GM12878 (cell line): ENCODE measurements at regions of chr6 and their contacts with region 1.

Region 1: DNA sequence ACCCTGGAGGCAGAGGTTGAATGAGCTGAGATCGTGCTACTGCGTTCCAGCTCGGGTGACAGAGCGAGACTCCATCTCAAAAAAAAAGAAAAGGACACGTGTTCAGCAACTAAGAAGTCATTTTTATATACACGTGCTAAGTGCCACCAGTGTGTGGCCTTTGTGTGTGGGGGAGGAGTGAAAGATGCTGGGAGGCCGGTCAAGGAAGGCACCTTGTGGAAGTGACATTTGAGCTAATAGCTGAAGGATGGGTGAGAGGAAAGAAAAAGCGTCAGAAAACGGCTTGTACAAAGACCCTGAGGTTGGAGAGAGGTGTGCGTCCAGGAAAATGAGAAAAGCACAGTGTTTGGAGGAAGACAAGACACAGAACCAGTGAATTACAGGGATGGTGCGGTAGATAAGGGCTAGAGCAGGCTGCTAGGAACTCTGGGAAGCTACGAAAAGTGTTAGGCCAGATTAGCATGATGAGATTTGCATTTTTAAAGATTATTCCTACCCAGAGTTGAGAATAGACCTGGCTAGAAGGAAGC is 11.6 kb downstream of the RREB1 start:
- DNase-seq: no peak
- ATAC-seq: no peak
- H3K4me3 ChIP-seq: no peak overlapping the region
- H3K27ac ChIP-seq: no peak overlapping the region
- H3K4me1 ChIP-seq: peaks cover 18% of the 10 kb centered on the region
- H3K27me3 ChIP-seq: no peaks in the 10 kb centered on the region
- CTCF ChIP-seq: no peak
- EP300 ChIP-seq: no peak
- POLR2A ChIP-seq: no peak
- RAD21 ChIP-seq: no peak

Region 2: GRCh38 chr6:7129784-7130569 is 10.6 kb after region 1 on chr6:
- CTCF ChIA-PET with region 1: interaction called, 8 read pairs
- POLR2A ChIA-PET with region 1: interaction called, 17 read pairs
- RAD21 ChIA-PET with region 1: interaction called, 23 read pairs
- SMC1A ChIA-PET with region 1: interaction called, 94 read pairs
- in situ Hi-C with region 1: no loop called
- intact Hi-C with region 1: no loop called
- DNase-seq: no peak
- ATAC-seq: peak; percentile 31
- H3K4me3 ChIP-seq: no peak overlapping the region
- H3K27ac ChIP-seq: peak overlapping the region; percentile 43; the same call in 1 of the 2 replicates
- H3K4me1 ChIP-seq: peaks cover 57% of the 10 kb centered on the region
- H3K27me3 ChIP-seq: no peaks in the 10 kb centered on the region
- CTCF ChIP-seq: no peak
- EP300 ChIP-seq: no peak
- POLR2A ChIP-seq: no peak
- RAD21 ChIP-seq: no peak

Region 3: DNA sequence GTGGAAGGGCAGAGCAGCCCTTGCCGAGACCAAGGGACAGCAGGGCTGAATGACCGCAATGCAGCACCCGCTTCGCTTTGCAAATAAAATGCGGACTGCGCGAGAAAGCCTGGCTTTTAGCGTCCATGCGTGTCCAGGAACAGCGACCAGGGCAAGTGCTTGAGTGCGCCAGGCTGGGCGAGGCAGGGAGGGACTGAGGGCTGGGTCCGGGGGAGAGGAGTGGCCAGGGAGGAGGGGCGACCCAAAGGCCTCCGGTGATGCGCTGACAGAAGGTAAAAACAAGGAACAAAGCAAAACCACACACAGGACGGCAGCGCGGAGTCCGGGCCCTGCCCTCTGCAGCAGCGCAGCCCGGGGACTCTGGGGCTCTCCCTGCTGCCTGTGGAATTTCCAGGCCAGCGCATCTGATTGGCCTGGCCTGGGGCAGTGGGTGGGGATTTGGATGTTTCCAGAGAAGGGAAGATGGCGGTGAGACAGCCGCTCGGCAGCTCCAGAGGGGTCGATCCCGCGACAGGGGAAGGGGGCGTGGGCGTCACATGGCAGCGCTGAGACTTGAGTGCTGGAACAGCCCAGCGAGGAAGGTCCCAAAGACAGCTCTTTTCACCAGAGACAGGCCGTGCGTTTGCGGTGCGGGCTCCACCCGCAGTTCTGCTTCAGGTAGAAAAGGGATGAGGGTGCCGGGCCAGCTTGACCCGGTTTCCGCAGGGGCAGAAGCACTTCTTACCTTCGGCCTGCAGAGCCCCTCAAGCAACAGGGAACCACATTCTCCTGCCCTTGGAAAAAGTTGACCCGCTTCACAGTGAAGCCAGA is 141.9 kb after region 1 on chr6:
- CTCF ChIA-PET with region 1: no interaction called
- POLR2A ChIA-PET with region 1: no interaction called
- RAD21 ChIA-PET with region 1: no interaction called
- SMC1A ChIA-PET with region 1: no interaction called
- in situ Hi-C with region 1: no loop called
- intact Hi-C with region 1: no loop called
- DNase-seq: no peak
- ATAC-seq: peak; percentile 91
- H3K4me3 ChIP-seq: peak overlapping the region; percentile 71
- H3K27ac ChIP-seq: no peak overlapping the region
- H3K4me1 ChIP-seq: peaks cover 9% of the 10 kb centered on the region
- H3K27me3 ChIP-seq: 0 out of 4 replicates have a peak, but pooled peaks cover 0 to 4% of the 10 kb centered on the region in 2 experiments
- CTCF ChIP-seq: no peak
- EP300 ChIP-seq: no peak
- POLR2A ChIP-seq: no peak
- RAD21 ChIP-seq: no peak